Gastrocnemius medialis (tissue), 4 donors: ENCODE measurements at regions of chr5 and their contacts with region 1.

Region 1: DNA sequence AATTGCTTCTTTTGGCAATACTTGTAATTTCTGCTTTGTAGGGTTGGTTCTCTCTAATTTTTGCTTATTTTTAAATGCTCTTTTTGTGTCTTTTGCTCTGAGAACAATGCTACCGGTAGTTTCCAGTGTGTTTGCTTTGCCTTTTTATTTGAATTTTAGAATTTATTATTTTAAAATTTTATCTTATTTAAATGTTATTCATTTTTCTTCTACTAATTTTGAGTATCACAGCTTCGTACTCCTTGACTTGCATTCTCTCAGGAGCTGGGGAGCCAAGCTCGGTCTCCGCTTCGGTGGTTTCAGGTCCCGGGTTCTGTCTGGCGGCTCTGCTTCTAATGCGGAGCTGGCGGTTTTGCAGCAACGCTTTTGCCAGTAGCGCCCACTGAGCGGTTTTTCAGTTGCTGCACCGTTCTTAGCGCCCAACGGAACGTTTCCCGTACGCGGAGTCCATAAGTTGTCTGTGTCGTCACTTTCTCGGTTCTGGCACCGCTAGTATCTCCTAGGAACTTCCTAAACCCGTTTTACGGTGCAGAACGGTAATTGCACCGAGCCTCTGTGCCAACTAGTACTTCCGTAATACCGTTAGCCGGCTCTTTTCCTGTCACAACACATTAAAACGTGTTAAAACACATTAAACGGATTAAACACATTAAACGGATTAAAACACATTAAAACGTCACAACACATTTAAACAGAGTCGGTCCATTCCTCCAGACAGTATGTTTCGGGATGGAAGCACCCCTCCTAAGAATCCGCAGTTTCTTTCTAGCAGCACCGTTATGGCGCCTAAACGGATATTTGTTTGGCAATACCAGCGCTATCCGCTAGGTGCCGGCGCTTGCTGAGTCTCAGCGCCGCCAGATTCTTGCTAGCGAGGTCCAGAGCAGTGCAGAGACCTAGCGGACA is 45.6 kb downstream of the ANXA2R start:
- DNase-seq: peak; percentile 64 to 85
- ATAC-seq: peak; percentile 87 to 88
- H3K4me3 ChIP-seq: peak overlapping the region; percentile 46 to 70 (median 66)
- H3K27ac ChIP-seq: peak overlapping the region; percentile 85 to 93 (median 88)
- H3K4me1 ChIP-seq: peaks cover 5 to 15% of the 10 kb centered on the region in 2 donors
- H3K27me3 ChIP-seq: peaks cover 68 to 83% (median 69%) of the 10 kb centered on the region in 3 donors
- CTCF ChIP-seq: peak; percentile 84 to 92 (median 89)
- POLR2A ChIP-seq: no peak

Region 2: DNA sequence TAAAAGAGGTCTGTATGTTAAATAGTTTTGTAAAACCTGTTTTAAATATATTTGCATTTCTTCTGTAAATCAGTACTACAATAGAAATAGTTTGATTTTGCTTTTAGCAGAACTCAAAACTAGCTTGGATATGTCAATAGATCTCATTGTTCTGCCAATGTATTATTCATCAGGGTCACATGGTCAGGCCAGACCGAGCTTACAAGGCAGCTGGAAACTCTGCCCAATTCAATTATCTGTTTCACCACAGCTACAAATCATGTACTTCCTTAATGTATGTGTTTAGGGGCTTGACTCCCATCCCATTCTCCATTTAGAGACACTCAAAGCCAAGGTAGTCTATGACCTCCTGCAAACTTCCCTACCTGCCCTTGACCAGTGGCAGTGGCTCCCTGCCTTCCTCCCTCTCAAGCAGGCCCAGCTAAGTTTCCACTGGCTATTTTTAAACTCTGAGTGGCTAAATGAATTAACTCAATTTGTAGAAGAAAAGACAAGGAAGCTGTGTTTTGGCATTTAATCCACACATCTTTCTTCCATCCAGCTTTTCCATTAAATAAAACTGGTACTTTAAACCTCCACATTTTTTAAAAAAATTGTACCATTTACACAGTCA is 136.4 kb before region 1 on chr5:
- in situ Hi-C with region 1: no loop called
- intact Hi-C with region 1: no loop called
- DNase-seq: no peak
- ATAC-seq: peak; percentile 90 to 92
- H3K4me3 ChIP-seq: peak overlapping the region in 3 of 4 donors; percentile 1 to 4 (median 4)
- H3K27ac ChIP-seq: peak overlapping the region; percentile 63 to 83 (median 75)
- H3K4me1 ChIP-seq: peaks cover 17 to 24% of the 10 kb centered on the region in 2 donors
- H3K27me3 ChIP-seq: no peaks in the 10 kb centered on the region
- CTCF ChIP-seq: no peak
- POLR2A ChIP-seq: no peak

Region 3: DNA sequence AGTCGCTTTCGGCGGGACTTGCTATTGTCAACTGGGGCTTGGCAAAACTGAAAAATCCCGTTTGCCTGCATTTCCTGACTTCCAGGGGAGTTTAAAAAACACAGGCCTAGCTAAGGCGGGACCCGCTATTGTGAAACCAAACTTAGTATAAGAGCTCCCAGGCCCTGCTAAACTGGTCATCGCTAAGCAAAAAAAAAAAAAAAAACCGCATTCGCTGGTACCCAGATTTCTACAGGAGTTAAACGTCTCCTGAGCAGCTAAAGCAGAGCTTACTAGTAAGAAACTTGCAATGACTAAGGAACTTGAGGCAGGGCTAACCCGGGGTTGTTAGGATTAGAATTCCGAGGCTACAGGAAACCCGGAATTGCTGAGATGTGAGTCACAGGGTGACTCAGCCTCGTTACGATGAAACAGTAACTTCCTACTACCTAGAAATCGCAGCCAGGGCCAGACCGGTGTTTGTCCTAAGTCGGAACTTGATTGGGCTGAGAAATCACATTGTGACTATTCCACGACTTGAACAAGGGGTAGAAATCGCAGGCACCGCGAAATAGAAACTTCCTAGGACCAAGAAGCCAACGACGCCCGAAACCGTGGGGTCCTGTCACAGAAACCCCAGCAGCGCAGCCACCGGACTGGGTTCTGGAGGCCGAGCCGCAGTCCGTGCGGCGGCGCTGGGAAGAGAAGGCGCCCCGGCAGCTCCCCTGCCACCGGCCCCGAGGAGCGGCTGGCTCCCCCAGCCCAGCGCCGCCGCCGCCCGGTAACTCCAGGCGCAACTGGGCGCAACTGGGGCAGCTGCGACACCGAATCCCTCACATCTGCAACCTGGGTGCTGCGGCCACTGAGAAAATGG is 43.8 kb before region 1 on chr5:
- in situ Hi-C with region 1: loop called in 1 of 4 experiments (anchors 5 kb)
- intact Hi-C with region 1: loop called (anchors 2 kb)
- DNase-seq: peak; percentile 46 to 58
- ATAC-seq: peak; percentile 80 to 90
- H3K4me3 ChIP-seq: peak overlapping the region; percentile 60 to 74 (median 65)
- H3K27ac ChIP-seq: peak overlapping the region; percentile 80 to 84 (median 83)
- H3K4me1 ChIP-seq: peaks cover 22 to 33% of the 10 kb centered on the region in 2 donors
- H3K27me3 ChIP-seq: peaks cover 69 to 81% (median 69%) of the 10 kb centered on the region in 3 donors
- CTCF ChIP-seq: no peak
- POLR2A ChIP-seq: peak in 1 of 2 donors; percentile 44

Region 4: DNA sequence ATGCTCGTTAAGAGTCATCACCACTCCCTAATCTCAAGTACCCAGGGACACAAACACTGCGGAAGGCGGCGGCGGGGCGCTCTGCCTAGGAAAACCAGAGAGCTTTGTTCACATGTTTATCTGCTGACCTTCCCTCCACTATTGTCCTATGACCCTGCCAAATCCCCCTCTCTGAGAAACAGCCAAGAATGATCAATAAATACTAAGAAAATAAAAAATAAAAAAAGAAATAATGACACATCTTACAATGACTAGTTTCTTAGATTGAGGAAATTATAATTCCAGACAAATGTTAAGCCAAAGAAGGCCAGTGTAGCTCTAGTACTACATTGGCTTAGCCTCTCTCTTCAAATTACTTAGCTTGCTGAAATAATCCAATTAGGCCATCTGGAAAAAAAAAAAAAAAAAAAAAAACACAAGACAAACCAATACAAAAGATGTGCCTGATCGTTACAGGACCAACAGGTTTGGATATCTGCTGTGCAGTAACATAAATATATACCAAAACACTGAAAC is 12.3 kb before region 1 on chr5:
- in situ Hi-C with region 1: no loop called
- intact Hi-C with region 1: no loop called
- DNase-seq: no peak
- ATAC-seq: no peak
- H3K4me3 ChIP-seq: no peak overlapping the region
- H3K27ac ChIP-seq: no peak overlapping the region
- H3K4me1 ChIP-seq: peaks cover 0 to 2% of the 10 kb centered on the region in 2 donors
- H3K27me3 ChIP-seq: peaks cover 0 to 5% (median 0%) of the 10 kb centered on the region in 3 donors
- CTCF ChIP-seq: no peak
- POLR2A ChIP-seq: no peak

Region 5: GRCh38 chr5:43008369-43009153 is 14.1 kb after region 1 on chr5:
- in situ Hi-C with region 1: no loop called
- intact Hi-C with region 1: loop called (anchors 1 kb)
- DNase-seq: peak; percentile 72 to 85
- ATAC-seq: peak; percentile 79 to 81
- H3K4me3 ChIP-seq: peak overlapping the region; percentile 49 to 70 (median 68)
- H3K27ac ChIP-seq: peak overlapping the region; percentile 71 to 91 (median 87)
- H3K4me1 ChIP-seq: peaks cover 0 to 8% of the 10 kb centered on the region in 2 donors
- H3K27me3 ChIP-seq: peaks cover 0 to 33% (median 6%) of the 10 kb centered on the region in 3 donors
- CTCF ChIP-seq: peak in 1 of 5 experiments; percentile 8
- POLR2A ChIP-seq: peak; percentile 64 to 74

Region 6: DNA sequence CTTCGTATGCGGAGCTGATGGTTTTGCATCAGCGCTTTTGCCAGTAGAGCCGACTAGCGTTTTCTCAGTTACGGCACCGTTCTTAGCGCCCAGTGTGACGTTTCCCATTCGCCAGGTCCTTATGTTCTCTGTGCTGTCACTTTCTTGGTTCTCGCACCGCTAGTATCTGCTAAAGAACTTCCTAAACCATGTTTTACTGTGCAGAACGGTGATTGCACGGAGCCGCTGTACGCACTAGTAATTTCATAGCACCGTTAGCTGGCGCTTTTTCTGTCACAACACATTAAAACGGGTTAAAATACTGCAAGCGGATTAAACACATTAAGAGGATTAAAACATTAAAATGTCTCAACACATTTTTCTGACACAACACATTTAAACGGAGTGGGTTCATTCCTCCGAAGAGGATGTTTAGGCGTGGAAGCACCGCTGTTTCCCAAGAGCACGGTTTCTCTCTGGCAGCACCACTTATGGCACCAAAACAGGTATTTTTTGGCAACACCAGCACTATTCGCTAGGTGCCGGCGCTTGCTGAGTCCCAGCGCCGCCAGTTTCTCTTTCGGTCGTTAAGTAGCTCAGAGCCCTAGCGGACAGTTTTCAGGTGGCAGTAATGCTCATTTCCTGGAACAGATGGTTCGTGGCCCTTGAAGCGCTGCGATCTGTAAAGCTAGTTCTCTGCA is 25.3 kb after region 1 on chr5:
- in situ Hi-C with region 1: no loop called
- intact Hi-C with region 1: loop called (anchors 2 kb)
- DNase-seq: peak; percentile 53 to 74
- ATAC-seq: peak; percentile 62 to 67
- H3K4me3 ChIP-seq: peak overlapping the region; percentile 68 to 90 (median 80)
- H3K27ac ChIP-seq: peak overlapping the region; percentile 95 to 100 (median 96)
- H3K4me1 ChIP-seq: peaks cover 6 to 19% of the 10 kb centered on the region in 2 donors
- H3K27me3 ChIP-seq: peaks cover 0 to 9% (median 0%) of the 10 kb centered on the region in 3 donors
- CTCF ChIP-seq: peak in 4 of 5 experiments; percentile 28 to 65 (median 51)
- POLR2A ChIP-seq: no peak